Heart left ventricle (tissue), 16 donors: ENCODE measurements at regions of chr13 and their contacts with region 1.

Region 1: DNA sequence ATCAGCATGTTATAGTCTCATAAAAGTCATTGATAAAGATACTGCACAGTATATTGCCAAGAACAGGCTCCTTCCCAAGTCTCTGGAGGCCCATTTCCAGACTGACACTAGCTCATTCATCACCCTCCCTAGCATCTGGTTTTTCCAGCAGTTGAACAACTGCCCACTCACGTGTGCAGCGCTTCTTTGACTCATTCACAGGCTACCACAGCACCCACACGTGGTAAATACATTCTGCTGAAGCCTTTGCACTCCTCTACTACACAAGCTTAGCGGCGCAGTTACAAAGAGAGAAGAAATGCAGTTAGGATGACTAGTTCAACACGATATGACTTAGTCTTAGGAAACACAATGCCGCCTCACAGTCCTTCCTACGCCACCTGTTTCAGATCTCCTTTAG is 87.7 kb downstream of the DOCK9 start:
- DNase-seq: peak in 1 of 5 donors; percentile 33
- ATAC-seq: peak; percentile 28 to 88 (median 68)
- H3K4me3 ChIP-seq: no peak overlapping the region
- H3K27ac ChIP-seq: peak overlapping the region in 1 of 12 donors; percentile 34
- H3K4me1 ChIP-seq: peaks cover 0 to 25% (median 11%) of the 10 kb centered on the region in 12 donors
- H3K27me3 ChIP-seq: no peaks in the 10 kb centered on the region
- CTCF ChIP-seq: no peak
- POLR2A ChIP-seq: no peak

Region 2: GRCh38 chr13:98821372-98822224 is 68.6 kb before region 1 on chr13:
- intact Hi-C with region 1: no loop called
- DNase-seq: no peak
- ATAC-seq: peak in 3 of 4 donors; percentile 23 to 73 (median 63)
- H3K4me3 ChIP-seq: no peak overlapping the region
- H3K27ac ChIP-seq: peak overlapping the region; percentile 33 to 77 (median 54)
- H3K4me1 ChIP-seq: peaks cover 4 to 51% (median 35%) of the 10 kb centered on the region in 12 donors
- H3K27me3 ChIP-seq: no peaks in the 10 kb centered on the region
- CTCF ChIP-seq: no peak
- POLR2A ChIP-seq: no peak

Region 3: GRCh38 chr13:98869408-98870090 is 20.6 kb before region 1 on chr13:
- intact Hi-C with region 1: loop called in 1 of 10 experiments (anchors 1 kb)
- DNase-seq: peak in 4 of 5 donors; percentile 29 to 40 (median 33)
- ATAC-seq: peak in 3 of 4 donors; percentile 64 to 68 (median 65)
- H3K4me3 ChIP-seq: no peak overlapping the region
- H3K27ac ChIP-seq: no peak overlapping the region
- H3K4me1 ChIP-seq: peaks cover 0 to 5% (median 0%) of the 10 kb centered on the region in 12 donors
- H3K27me3 ChIP-seq: no peaks in the 10 kb centered on the region
- CTCF ChIP-seq: peak in 5 of 12 donors; percentile 7 to 29 (median 22)
- POLR2A ChIP-seq: no peak

Region 4: GRCh38 chr13:98972627-98973026 is 82.4 kb after region 1 on chr13:
- intact Hi-C with region 1: no loop called
- DNase-seq: no peak
- ATAC-seq: no peak
- H3K4me3 ChIP-seq: peak overlapping the region in 3 of 12 donors; percentile 3 to 14 (median 6)
- H3K27ac ChIP-seq: peak overlapping the region in 11 of 12 donors; percentile 48 to 84 (median 74)
- H3K4me1 ChIP-seq: peaks cover 0 to 83% (median 51%) of the 10 kb centered on the region in 12 donors
- H3K27me3 ChIP-seq: peaks cover 0 to 7% (median 0%) of the 10 kb centered on the region in 9 donors
- CTCF ChIP-seq: no peak
- POLR2A ChIP-seq: no peak